ENCODE measurements at regions of chr15 and their contacts with region 1.

Region 1: GRCh38 chr15:68783226-68784058 is 37.3 kb downstream of the ANP32A start:
- DNase-seq: peak; percentile 74
- ATAC-seq: peak; percentile 84
- H3K4me3 ChIP-seq: no peak overlapping the region
- H3K4me3 Mint-ChIP-seq: no peak overlapping the region
- H3K27ac ChIP-seq: peak overlapping the region in 1 of 2 donors; percentile 10
- H3K27ac Mint-ChIP-seq: peak overlapping the region; percentile 50
- H3K4me1 ChIP-seq: peaks cover 30 to 32% of the 10 kb centered on the region in 2 donors
- H3K4me1 Mint-ChIP-seq: peaks cover 32% of the 10 kb centered on the region
- H3K27me3 ChIP-seq: no peaks in the 10 kb centered on the region
- H3K27me3 Mint-ChIP-seq: no peaks in the 10 kb centered on the region
- CTCF ChIP-seq: peak; percentile 82

Region 2: GRCh38 chr15:68352401-68353062 is 430.9 kb before region 1 on chr15:
- CTCF ChIA-PET with region 1: no interaction called
- POLR2A ChIA-PET with region 1: no interaction called
- intact Hi-C with region 1: no loop called
- DNase-seq: no peak
- ATAC-seq: peak; percentile 21
- H3K4me3 ChIP-seq: no peak overlapping the region
- H3K4me3 Mint-ChIP-seq: no peak overlapping the region
- H3K27ac ChIP-seq: no peak overlapping the region
- H3K27ac Mint-ChIP-seq: peak overlapping the region; percentile 21
- H3K4me1 ChIP-seq: peaks cover 4 to 5% of the 10 kb centered on the region in 2 donors
- H3K4me1 Mint-ChIP-seq: peaks cover 8% of the 10 kb centered on the region
- H3K27me3 ChIP-seq: no peaks in the 10 kb centered on the region
- H3K27me3 Mint-ChIP-seq: peaks cover 9% of the 10 kb centered on the region
- CTCF ChIP-seq: no peak

Region 3: GRCh38 chr15:68730471-68730919 is 52.9 kb before region 1 on chr15:
- CTCF ChIA-PET with region 1: no interaction called
- POLR2A ChIA-PET with region 1: no interaction called
- intact Hi-C with region 1: loop called (anchors 2 kb)
- DNase-seq: peak; percentile 51
- ATAC-seq: no peak
- H3K4me3 ChIP-seq: no peak overlapping the region
- H3K4me3 Mint-ChIP-seq: no peak overlapping the region
- H3K27ac ChIP-seq: no peak overlapping the region
- H3K27ac Mint-ChIP-seq: no peak overlapping the region
- H3K4me1 ChIP-seq: peaks cover 15 to 23% of the 10 kb centered on the region in 2 donors
- H3K4me1 Mint-ChIP-seq: peaks cover 21% of the 10 kb centered on the region
- H3K27me3 ChIP-seq: peaks cover 0 to 2% (median 0%) of the 10 kb centered on the region in 4 experiments
- H3K27me3 Mint-ChIP-seq: peaks cover 4% of the 10 kb centered on the region
- CTCF ChIP-seq: peak; percentile 58

Region 4: GRCh38 chr15:68795298-68795848 is 11.9 kb after region 1 on chr15:
- CTCF ChIA-PET with region 1: interaction called, 34 read pairs
- POLR2A ChIA-PET with region 1: no interaction called
- intact Hi-C with region 1: no loop called
- DNase-seq: peak; percentile 76
- ATAC-seq: peak; percentile 75
- H3K4me3 ChIP-seq: peak overlapping the region in 2 of 5 experiments; percentile 17 to 28
- H3K4me3 Mint-ChIP-seq: peak overlapping the region; percentile 73
- H3K27ac ChIP-seq: peak overlapping the region; percentile 58 to 74
- H3K27ac Mint-ChIP-seq: peak overlapping the region; percentile 80
- H3K4me1 ChIP-seq: peaks cover 68 to 82% of the 10 kb centered on the region in 2 donors
- H3K4me1 Mint-ChIP-seq: peaks cover 93% of the 10 kb centered on the region
- H3K27me3 ChIP-seq: no peaks in the 10 kb centered on the region
- H3K27me3 Mint-ChIP-seq: no peaks in the 10 kb centered on the region
- CTCF ChIP-seq: no peak

Measured in B cell (primary cell).